ENCODE measurements at regions of chr19 and their contacts with region 1.

Region 1: GRCh38 chr19:43784981-43785808 is 4.4 kb upstream of the KCNN4 start:
- DNase-seq: no peak
- ATAC-seq: peak; percentile 13
- H3K4me3 Mint-ChIP-seq: peak overlapping the region; percentile 48
- H3K27ac Mint-ChIP-seq: peak overlapping the region; percentile 94
- H3K4me1 Mint-ChIP-seq: peaks cover 44% of the 10 kb centered on the region
- H3K27me3 Mint-ChIP-seq: no peaks in the 10 kb centered on the region
- CTCF ChIP-seq: peak; percentile 92

Region 2: GRCh38 chr19:43463381-43464136 is 321.6 kb before region 1 on chr19:
- CTCF ChIA-PET with region 1: no interaction called
- POLR2A ChIA-PET with region 1: no interaction called
- intact Hi-C with region 1: no loop called
- DNase-seq: peak; percentile 95
- ATAC-seq: peak; percentile 94
- H3K4me3 Mint-ChIP-seq: peak overlapping the region; percentile 92
- H3K27ac Mint-ChIP-seq: peak overlapping the region; percentile 88
- H3K4me1 Mint-ChIP-seq: peaks cover 17% of the 10 kb centered on the region
- H3K27me3 Mint-ChIP-seq: peaks cover 10% of the 10 kb centered on the region
- CTCF ChIP-seq: no peak

Region 3: DNA sequence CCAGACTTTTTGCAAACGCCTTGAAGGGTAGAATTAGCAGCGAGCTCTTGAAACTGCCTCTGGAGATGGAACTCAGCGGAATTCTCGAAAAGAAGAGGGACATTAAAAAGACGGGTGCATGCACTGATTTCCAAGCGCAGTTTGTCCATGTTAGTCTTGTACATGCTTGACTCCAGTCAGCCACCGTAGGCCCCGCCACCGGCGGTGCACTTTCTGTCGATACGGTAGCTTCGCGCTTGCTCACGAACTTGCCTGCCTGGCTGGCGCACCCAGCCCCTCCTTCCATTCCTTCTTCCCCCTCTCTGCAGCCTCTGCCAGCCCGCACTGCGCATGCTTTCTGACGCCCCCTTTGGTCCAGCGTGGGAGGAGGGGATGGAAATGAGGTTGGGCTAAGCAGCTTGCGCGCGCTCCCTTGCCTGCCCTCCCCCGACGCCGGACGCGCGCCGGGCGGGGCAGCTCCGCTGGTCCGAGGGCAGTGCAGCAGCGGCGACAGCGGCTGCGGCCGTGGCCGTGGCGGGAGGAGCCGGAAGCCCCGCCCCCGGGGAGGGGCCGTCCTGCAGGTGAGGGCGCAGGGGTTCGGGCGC is 252.1 kb before region 1 on chr19 and contains the start of gene ZNF575:
- CTCF ChIA-PET with region 1: no interaction called
- POLR2A ChIA-PET with region 1: interaction called, 5 read pairs
- intact Hi-C with region 1: loop called (anchors 5 kb)
- DNase-seq: peak; percentile 77
- ATAC-seq: peak; percentile 45
- H3K4me3 Mint-ChIP-seq: peak within 1 kb of the TSS; percentile 97
- H3K27ac Mint-ChIP-seq: peak within 1 kb of the TSS; percentile 98
- H3K4me1 Mint-ChIP-seq: peaks cover 19% of the 10 kb centered on the region
- H3K27me3 Mint-ChIP-seq: no peaks in the 10 kb centered on the region
- CTCF ChIP-seq: no peak
- total RNA-seq, gene ZNF575: 1.9 and 3.4 TPM in 2 replicates

Region 4: DNA sequence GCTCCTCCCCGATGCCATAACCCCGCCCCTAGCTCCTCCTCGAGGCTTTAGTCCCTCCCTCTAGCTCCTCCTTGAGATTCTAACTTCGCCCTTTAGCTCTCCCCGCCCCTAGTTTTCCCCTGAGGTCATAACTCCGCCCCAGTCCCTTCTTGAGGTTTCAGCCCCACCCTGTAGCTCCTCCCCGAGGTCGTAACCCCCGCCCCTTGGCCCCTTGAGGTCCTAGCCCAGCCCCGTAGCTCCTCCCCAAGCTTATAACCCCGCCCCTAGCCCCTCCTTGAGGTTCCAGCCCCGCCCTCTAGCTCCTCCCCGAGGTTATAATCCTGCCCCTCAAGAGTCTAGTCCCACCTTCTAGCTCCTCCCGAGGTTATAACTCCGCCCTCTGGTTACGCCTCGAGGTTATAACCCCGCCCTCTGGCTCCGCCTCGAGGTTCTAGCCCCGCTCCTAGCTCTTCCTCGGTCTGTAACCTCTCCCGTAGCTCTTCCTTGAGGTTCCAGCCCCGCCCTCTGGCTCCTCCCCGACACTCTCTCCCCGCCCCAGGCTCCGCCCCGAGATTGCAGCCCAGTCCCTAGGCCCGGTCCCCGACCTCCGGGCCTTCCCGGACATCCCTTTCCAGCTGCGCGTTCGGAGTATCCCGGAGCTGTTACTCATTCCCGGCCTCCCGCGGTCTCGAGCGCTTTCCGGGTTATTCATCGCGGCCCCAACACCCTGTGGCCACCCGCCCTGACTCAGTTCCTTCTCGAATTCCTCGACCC is 116.6 kb before region 1 on chr19:
- CTCF ChIA-PET with region 1: interaction called, 3 read pairs
- POLR2A ChIA-PET with region 1: interaction called, 11 read pairs
- intact Hi-C with region 1: loop called (anchors 1 kb)
- DNase-seq: peak; percentile 76
- ATAC-seq: peak; percentile 88
- H3K4me3 Mint-ChIP-seq: peak overlapping the region; percentile 80
- H3K27ac Mint-ChIP-seq: peak overlapping the region; percentile 24
- H3K4me1 Mint-ChIP-seq: peaks cover 44% of the 10 kb centered on the region
- H3K27me3 Mint-ChIP-seq: peaks cover 9% of the 10 kb centered on the region
- CTCF ChIP-seq: no peak

Region 5: DNA sequence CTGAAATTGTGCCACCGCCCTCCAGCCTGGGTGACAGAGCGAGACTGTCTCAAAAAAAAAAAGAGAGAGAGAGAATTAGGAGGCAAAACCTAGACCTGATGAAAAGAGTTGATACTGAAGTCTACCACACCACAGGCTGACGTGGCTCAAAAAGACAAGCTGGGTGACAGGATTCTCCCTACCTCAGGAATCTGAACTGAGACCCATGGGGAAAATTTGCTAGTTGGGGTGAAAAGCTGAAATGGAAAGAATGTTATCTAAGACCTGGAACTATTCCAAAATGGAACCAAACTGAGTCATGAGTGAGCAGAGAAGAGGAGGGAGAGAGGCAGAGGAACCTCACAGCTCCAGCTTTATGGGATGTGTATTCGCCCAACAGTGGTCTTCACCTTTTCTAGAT is 42.2 kb before region 1 on chr19:
- CTCF ChIA-PET with region 1: interaction called, 113 read pairs
- POLR2A ChIA-PET with region 1: interaction called, 661 read pairs
- intact Hi-C with region 1: loop called (anchors 1 kb)
- DNase-seq: no peak
- ATAC-seq: no peak
- H3K4me3 Mint-ChIP-seq: no peak overlapping the region
- H3K27ac Mint-ChIP-seq: no peak overlapping the region
- H3K4me1 Mint-ChIP-seq: peaks cover 22% of the 10 kb centered on the region
- H3K27me3 Mint-ChIP-seq: no peaks in the 10 kb centered on the region
- CTCF ChIP-seq: no peak

Region 6: DNA sequence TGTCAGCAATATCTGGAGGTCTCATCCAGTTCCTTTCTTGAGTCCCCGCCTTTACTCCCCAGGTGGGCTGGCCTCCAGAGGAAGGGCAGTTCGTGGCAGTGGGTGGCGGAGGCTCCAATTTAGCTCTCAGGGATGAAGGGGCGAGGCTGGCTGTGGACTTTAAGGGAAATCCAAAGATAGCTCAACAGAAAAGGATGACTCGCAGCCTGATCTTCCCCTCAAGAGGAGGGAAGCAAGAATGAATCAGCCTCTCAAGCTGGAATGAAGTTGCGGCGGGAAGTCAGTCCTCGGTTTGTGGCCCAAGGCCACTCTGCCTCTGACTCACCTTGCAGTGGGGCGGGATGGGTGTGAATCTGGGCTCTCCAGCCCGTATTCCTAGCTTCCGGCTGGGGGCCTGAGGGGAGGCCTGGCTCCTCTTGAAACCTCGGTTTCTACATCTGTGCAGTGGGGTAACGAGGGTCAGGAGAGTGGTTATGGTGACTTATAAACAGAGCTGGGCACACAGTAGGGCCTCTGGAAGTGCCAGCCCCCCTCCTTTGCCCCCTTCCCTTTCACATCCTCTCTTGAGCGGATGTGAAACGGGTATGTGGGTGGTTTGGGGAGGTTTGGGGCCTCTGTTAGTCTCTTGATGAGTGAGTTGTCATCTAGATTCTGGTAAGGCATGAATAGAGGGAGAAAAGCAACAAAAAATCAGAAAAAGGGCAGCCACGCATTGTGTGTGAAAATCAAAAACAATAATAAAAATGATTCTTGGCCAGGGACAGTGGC is 19.9 kb before region 1 on chr19:
- CTCF ChIA-PET with region 1: interaction called, 50 read pairs
- POLR2A ChIA-PET with region 1: interaction called, 661 read pairs
- intact Hi-C with region 1: loop called (anchors 1 kb)
- DNase-seq: peak; percentile 55
- ATAC-seq: peak; percentile 84
- H3K4me3 Mint-ChIP-seq: peak overlapping the region; percentile 76
- H3K27ac Mint-ChIP-seq: peak overlapping the region; percentile 94
- H3K4me1 Mint-ChIP-seq: peaks cover 68% of the 10 kb centered on the region
- H3K27me3 Mint-ChIP-seq: no peaks in the 10 kb centered on the region
- CTCF ChIP-seq: no peak